Motor neuron (in vitro differentiated cells): ENCODE measurements at regions of chr13 and their contacts with region 1.

Region 1: GRCh38 chr13:27362064-27362883 is 62.1 kb upstream of the GTF3A start:
- ATAC-seq: peak; percentile 95 to 99 (median 98)
- H3K4me3 ChIP-seq: peak overlapping the region; percentile 14 to 42 (median 31)
- H3K27ac ChIP-seq: no peak overlapping the region
- H3K4me1 ChIP-seq: no peaks in the 10 kb centered on the region

Region 2: GRCh38 chr13:26971990-26972887 is 390.0 kb before region 1 on chr13:
- in situ Hi-C with region 1: loop called in 2 of 9 experiments (anchors 10 to 25 kb)
- ATAC-seq: peak in 2 of 8 experiments; percentile 29 to 30
- H3K4me3 ChIP-seq: no peak overlapping the region
- H3K27ac ChIP-seq: no peak overlapping the region
- H3K4me1 ChIP-seq: peaks cover 0 to 3% of the 10 kb centered on the region in 2 donors

Region 3: DNA sequence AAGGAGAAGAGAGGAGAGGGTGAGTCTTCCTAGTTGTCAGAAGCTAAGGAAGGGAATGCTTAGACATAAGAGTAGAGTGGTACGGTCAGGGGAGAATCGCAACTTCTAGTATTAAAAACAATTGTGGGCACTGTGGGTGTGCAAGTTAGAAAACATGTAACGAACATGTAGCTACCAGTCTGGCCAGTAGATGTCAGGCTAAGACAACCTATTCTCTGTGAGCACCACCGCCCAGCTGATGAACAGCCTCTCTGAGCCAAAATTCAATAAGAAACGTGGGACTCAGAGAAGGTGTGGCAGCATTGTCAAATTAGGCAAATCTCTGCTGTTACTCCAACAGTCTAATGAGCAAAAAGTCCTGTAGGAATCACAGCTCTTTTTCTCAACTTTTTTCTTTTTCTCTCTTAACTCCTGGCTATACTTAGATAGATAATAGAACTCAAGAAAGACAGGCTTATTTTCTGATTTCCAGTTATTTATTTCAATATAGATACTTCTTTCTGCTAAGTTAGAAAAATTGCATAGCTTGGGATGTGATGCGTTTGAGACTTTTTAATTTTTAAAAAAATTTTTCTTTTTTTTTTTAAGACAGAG is 376.9 kb before region 1 on chr13:
- in situ Hi-C with region 1: loop called in 5 of 9 experiments (anchors 5 to 25 kb)
- ATAC-seq: peak; percentile 49 to 89 (median 74)
- H3K4me3 ChIP-seq: no peak overlapping the region
- H3K27ac ChIP-seq: no peak overlapping the region
- H3K4me1 ChIP-seq: no peaks in the 10 kb centered on the region

Region 4: DNA sequence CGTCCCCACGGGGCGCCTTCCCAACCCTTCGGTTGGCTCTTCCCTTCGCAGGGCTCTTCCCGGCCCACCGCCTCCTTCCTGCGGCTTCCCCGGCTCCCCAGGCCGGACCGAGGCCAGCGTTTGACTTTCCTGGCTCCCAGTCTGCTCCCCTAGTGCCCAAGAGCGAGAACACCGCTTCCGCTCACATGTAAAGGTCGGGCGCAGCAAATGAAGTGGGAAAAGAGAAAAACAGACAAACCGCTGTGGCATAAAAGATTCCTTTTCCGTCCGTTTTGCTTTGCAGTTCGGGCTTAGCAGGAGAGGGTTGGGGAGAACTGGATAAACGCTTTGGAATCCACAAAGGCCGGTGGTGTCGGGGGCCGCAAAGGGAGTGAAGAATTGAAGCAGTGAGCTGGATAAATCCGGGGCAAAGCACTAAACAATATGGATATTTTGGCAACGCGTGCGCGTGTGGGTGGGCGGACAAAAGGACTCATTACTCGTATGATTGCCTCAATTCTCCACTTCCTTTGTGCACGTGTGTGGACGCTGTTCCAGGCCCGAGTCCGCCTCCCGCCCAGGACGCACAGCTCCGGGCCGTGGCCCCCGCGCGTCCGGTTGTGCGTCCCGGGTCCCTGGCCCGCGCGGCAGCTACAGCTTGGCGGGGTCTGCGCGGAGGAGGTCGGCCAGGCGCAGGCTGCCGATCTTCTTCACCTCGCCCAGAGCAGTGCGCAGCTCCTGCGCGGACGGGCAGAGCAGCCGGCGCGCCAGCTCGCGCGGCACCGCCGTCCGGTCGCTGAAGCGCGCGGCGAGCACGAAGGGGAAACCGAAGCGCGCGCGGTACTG is 615.4 kb after region 1 on chr13:
- in situ Hi-C with region 1: loop called in 5 of 9 experiments (anchors 10 to 25 kb)
- ATAC-seq: peak in 1 of 8 experiments; percentile 19
- H3K4me3 ChIP-seq: peak overlapping the region in 1 of 5 donors; percentile 9
- H3K27ac ChIP-seq: no peak overlapping the region
- H3K4me1 ChIP-seq: peaks cover 0 to 3% of the 10 kb centered on the region in 2 donors

Region 5: GRCh38 chr13:27997904-27998522 is 635.7 kb after region 1 on chr13:
- in situ Hi-C with region 1: loop called in 4 of 9 experiments (anchors 25 kb)
- ATAC-seq: peak; percentile 67 to 99 (median 82)
- H3K4me3 ChIP-seq: no peak overlapping the region
- H3K27ac ChIP-seq: no peak overlapping the region
- H3K4me1 ChIP-seq: no peaks in the 10 kb centered on the region